ENCODE measurements at regions of chr10 and their contacts with region 1.

Region 1: GRCh38 chr10:133117688-133118071 is 30.0 kb downstream of the ADGRA1 start:
- DNase-seq: peak; percentile 89 to 97
- ATAC-seq: peak; percentile 95 to 96
- H3K4me3 ChIP-seq: no peak overlapping the region
- H3K27ac ChIP-seq: peak overlapping the region; percentile 85 to 93 (median 88)
- H3K4me1 ChIP-seq: peaks cover 6 to 10% of the 10 kb centered on the region in 2 donors
- H3K27me3 ChIP-seq: no peaks in the 10 kb centered on the region
- CTCF ChIP-seq: peak in 1 of 5 experiments; percentile 33
- POLR2A ChIP-seq: no peak

Region 2: GRCh38 chr10:133087679-133088178 is 30.0 kb before region 1 on chr10 and contains the start of gene ADGRA1:
- in situ Hi-C with region 1: no loop called
- intact Hi-C with region 1: loop called (anchors 2 kb)
- DNase-seq: no peak
- ATAC-seq: peak in 1 of 2 donors; percentile 53
- H3K4me3 ChIP-seq: peak within 1 kb of the TSS; percentile 25 to 29 (median 28)
- H3K27ac ChIP-seq: no peak within 1 kb of the TSS
- H3K4me1 ChIP-seq: peaks cover 3% of the 10 kb centered on the region in 2 donors
- H3K27me3 ChIP-seq: peaks cover 48 to 61% (median 53%) of the 10 kb centered on the region in 3 donors
- CTCF ChIP-seq: no peak
- POLR2A ChIP-seq: no peak
- total RNA-seq, gene ADGRA1: not detected

Measured in gastrocnemius medialis (tissue), 4 donors.